ENCODE measurements at regions of chr13 and their contacts with region 1.

Region 1: DNA sequence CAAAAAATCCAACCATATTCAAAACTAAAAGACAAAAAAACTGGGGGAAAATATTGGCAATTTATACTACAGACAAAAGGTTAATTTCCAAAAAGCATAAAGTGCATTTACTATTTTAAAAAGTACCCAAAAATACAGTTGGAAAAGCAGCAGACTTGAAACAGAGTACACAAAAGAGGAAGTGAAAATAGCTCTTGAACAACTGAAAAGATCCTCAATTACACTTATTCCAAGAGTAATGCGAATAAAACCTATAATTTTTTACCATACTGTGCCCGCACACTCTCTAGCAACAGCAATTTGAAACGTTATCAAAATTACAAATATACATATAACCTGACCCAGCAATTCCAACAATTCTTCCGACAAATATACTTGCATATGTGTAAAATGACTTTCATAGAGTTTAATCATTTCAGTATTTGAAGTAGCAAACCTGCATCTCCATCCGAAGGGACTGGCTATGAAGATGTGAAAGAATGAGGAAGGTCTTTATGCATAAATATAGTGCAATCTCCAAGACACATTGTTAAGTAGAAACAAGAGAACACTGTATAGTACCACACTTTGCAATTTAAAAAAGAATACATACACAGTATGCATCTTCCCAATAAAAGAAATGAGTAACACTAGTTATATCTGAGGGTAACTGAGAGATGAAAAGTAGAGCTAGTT is 25.4 kb downstream of the ALG5 start:
- DNase-seq: peak; percentile 58
- H3K4me3 ChIP-seq: peak overlapping the region; percentile 22
- H3K27ac ChIP-seq: peak overlapping the region; percentile 51
- H3K4me1 ChIP-seq: peaks cover 15% of the 10 kb centered on the region
- CTCF ChIP-seq: no peak

Region 2: GRCh38 chr13:36919833-36920615 is 53.7 kb before region 1 on chr13 and contains the start of gene SMAD9:
- CTCF ChIA-PET with region 1: no interaction called
- POLR2A ChIA-PET with region 1: no interaction called
- intact Hi-C with region 1: loop called (anchors 5 kb)
- DNase-seq: peak; percentile 73
- H3K4me3 ChIP-seq: peak within 1 kb of the TSS; percentile 84
- H3K27ac ChIP-seq: peak within 1 kb of the TSS; percentile 79
- H3K4me1 ChIP-seq: peaks cover 85% of the 10 kb centered on the region
- CTCF ChIP-seq: no peak
- total RNA-seq, gene SMAD9: 9.7 and 10.8 TPM in 2 replicates

Region 3: DNA sequence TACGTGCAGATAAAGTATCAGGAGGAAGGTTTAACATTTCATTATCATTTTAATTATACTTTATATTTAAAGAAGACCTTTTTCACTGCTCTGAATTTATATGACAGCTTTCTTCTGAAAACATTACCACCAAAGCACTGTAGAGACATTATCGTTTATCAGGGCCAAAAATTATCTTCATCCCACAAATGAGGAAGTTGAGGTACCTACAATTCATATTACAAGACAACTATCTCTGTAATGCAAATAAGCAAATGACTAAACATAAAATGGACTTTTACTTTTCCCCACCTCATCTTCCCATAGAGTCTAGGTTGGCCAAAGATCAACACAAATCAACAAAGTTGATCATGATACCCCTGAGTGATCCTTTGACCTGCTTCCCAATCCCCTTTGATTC is 22.8 kb before region 1 on chr13:
- CTCF ChIA-PET with region 1: no interaction called
- POLR2A ChIA-PET with region 1: interaction called, 12 read pairs
- intact Hi-C with region 1: no loop called
- DNase-seq: no peak
- H3K4me3 ChIP-seq: no peak overlapping the region
- H3K27ac ChIP-seq: no peak overlapping the region
- H3K4me1 ChIP-seq: peaks cover 14% of the 10 kb centered on the region
- CTCF ChIP-seq: no peak